Activated T-helper 2 cell treated with anti-CD3 and anti-CD28 coated beads, Interferon-gamma antibody, Interleukin-2, Interleukin-4, amounts not matched to agents 10 μg/mL and 5 μg/mL and 100 μg/mL, durations not matched to agents 14 hours and 24 hours and 36 hours (primary cell): ENCODE measurements at regions of chr2 and their contacts with region 1.

Region 1: DNA sequence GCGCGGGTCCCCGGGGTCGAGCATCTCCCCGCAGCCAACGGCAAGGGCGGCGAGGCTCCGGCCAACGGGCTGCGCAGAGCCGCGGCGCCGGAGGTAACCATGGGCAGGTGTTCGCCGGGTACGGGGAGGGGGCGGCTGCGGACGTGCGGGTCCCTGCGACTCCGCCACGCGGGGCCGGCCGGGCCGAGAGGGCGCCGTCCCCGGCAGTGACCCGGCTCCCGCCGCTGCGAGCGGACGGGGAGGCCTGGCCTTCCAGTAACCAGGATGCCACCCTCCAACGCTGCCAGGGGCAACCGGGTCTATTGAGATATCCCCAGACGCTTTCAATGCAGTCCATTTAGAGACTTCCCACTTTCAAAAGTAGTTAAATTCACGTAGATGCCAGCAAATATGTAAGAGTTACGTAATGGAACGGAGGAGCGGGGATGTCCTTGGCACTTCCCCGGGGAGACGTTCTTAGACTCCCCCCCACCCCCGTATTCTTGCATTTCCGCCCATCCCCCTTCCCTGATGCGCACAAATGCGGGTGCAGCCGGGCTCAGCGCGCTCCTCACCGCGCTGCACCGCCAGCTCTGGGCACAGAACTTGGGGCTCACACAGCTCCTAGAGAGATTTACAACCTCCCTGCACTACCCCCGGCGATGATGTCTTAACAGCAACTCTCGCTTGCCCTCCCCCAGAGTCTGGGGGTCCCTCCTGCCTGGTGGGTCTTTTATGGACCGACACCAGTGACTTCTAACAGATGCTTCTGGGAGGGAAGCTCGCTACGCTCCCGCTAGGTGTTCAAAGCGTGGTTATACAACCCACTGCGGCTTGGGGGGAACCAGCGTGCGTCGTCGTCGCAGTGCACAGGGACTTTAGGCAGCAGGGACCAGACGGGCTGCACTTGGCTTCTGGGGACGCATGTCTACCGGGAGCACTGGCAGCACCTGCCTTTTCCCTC is 657 bp downstream of the SGPP2 start:
- DNase-seq: no peak
- H3K4me3 Mint-ChIP-seq: peak overlapping the region; percentile 88
- H3K27ac Mint-ChIP-seq: peak overlapping the region; percentile 86
- H3K4me1 Mint-ChIP-seq: peaks cover 37% of the 10 kb centered on the region
- H3K27me3 Mint-ChIP-seq: peaks cover 21% of the 10 kb centered on the region

Region 2: DNA sequence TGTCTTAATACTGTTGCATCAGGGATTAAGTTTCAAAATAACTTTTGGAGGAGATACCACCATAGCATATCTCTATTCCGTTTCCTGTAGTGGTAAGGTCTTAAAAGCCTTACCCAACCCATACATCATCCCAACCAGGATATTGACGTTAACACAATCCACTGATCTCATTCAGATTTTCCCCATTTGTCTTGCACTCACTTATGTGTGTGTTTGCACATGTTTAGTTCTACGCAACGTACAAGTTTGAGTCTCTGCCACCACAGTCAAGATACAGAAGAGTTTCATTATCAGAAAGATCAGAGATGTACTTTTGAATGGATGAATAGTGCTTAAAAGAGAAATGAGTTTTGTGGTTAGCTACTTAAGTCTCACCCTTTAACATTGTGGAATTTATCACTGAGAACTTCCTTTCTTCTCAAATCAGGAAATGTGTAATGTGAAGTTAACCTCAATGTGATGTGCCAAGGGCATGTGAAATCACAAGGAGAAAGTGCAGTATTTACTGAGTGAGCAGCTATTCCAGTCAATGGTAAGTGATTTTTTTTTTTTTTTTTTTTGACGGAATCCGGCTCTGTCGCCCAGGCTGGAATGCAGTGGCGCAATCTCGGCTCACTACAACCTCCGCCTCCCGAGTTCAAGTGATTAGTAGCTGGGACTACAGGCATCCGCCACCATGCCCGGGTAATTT is 783.7 kb before region 1 on chr2:
- intact Hi-C with region 1: loop called (anchors 5 kb)
- DNase-seq: no peak
- H3K4me3 Mint-ChIP-seq: no peak overlapping the region
- H3K27ac Mint-ChIP-seq: peak overlapping the region; percentile 33
- H3K4me1 Mint-ChIP-seq: peaks cover 2% of the 10 kb centered on the region
- H3K27me3 Mint-ChIP-seq: no peaks in the 10 kb centered on the region

Region 3: DNA sequence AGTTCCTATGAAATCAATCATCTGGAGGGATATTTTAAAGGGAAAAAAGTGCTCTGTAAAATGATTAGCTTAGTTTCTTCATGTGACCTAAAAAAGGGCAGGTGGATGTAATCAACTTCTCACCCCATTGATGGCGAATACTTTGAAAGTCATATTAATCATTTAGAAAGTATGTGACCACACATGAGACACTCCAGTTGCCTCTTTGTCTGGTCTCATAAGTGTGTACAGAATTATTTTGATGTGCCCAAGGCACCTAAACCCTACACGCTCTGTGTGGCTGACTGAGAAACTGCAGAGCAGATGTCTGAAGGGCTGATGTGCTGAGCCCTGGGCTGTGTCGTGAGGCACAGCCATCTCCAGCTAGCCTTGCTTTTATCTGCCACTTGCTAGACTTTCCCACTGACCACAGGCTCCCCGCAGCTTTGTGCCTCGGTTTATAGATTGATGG is 26.2 kb after region 1 on chr2:
- intact Hi-C with region 1: loop called (anchors 2 kb)
- DNase-seq: no peak
- H3K4me3 Mint-ChIP-seq: no peak overlapping the region
- H3K27ac Mint-ChIP-seq: no peak overlapping the region
- H3K4me1 Mint-ChIP-seq: peaks cover 12% of the 10 kb centered on the region
- H3K27me3 Mint-ChIP-seq: no peaks in the 10 kb centered on the region

Region 4: GRCh38 chr2:222655787-222656525 is 231.0 kb after region 1 on chr2 and contains the start of gene FARSB:
- intact Hi-C with region 1: loop called (anchors 10 kb)
- DNase-seq: peak; percentile 92
- H3K4me3 Mint-ChIP-seq: peak within 1 kb of the TSS; percentile 98
- H3K27ac Mint-ChIP-seq: peak within 1 kb of the TSS; percentile 93
- H3K4me1 Mint-ChIP-seq: peaks cover 38% of the 10 kb centered on the region
- H3K27me3 Mint-ChIP-seq: no peaks in the 10 kb centered on the region
- total RNA-seq, gene FARSB: 47.7 and 49.8 TPM in 2 replicates